ENCODE measurements at regions of chr5 and their contacts with region 1.

Region 1: GRCh38 chr5:179345433-179346321 is at the start of gene ADAMTS2:
- DNase-seq: no peak
- H3K4me3 ChIP-seq: peak within 1 kb of the TSS; percentile 71 to 80 (median 77)
- H3K27ac ChIP-seq: peak within 1 kb of the TSS; percentile 70 to 79 (median 76)
- H3K4me1 ChIP-seq: peaks cover 11 to 46% (median 40%) of the 10 kb centered on the region in 4 donors
- H3K27me3 ChIP-seq: peaks cover 0 to 40% (median 0%) of the 10 kb centered on the region in 4 donors
- CTCF ChIP-seq: no peak
- EP300 ChIP-seq: no peak
- POLR2A ChIP-seq: no peak
- total RNA-seq, gene ADAMTS2: 17.8 to 31.8 (median 21.4) TPM

Region 2: DNA sequence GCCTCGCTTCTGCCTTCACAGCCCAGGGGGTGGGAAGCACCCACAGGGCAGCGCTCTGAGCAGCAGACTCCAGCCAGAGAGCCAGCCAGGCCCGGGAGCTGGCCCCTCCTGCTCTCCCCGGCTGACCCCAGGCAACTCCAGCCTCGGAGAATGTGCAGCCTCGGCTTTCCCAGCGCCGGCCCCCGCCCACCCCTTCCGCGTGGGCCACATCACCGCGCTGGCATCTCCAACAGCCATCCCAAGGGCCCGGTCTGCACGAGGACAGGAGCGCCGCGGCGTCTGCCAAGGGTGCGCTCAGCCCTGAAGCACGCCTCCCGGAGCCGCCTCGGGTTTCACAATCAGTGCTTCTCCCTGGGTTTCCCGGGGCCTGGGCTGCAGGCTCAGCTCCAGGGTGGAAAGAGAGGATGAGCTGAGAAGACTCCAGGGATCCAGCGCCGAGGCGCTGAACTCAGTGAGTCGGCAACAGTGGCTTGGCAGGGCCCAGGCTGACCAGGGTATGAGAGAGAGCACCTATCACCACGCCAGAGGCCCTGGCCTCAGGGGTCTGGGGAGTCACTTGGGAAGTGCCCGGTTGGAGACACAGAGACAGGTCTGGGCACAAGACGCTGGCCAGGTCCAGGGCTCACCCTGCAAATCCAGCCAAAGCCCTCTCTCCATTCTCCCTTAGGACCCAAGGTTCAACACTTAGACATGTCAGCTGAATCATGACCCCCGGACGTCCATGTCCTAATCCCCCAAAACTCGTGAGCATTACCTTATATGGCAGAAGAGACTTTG is 80.0 kb before region 1 on chr5:
- intact Hi-C with region 1: loop called (anchors 5 kb)
- DNase-seq: peak; percentile 96
- H3K4me3 ChIP-seq: peak overlapping the region in 3 of 4 donors; percentile 19 to 43 (median 28)
- H3K27ac ChIP-seq: peak overlapping the region; percentile 77 to 81 (median 80)
- H3K4me1 ChIP-seq: peaks cover 26 to 59% (median 50%) of the 10 kb centered on the region in 4 donors
- H3K27me3 ChIP-seq: no peaks in the 10 kb centered on the region
- CTCF ChIP-seq: no peak
- EP300 ChIP-seq: no peak
- POLR2A ChIP-seq: no peak

Region 3: GRCh38 chr5:179494774-179495526 is 149.3 kb after region 1 on chr5:
- intact Hi-C with region 1: loop called (anchors 5 kb)
- DNase-seq: no peak
- H3K4me3 ChIP-seq: no peak overlapping the region
- H3K27ac ChIP-seq: no peak overlapping the region
- H3K4me1 ChIP-seq: no peaks in the 10 kb centered on the region
- H3K27me3 ChIP-seq: peaks cover 0 to 35% (median 2%) of the 10 kb centered on the region in 4 donors
- CTCF ChIP-seq: no peak
- EP300 ChIP-seq: no peak
- POLR2A ChIP-seq: no peak

Measured in esophagus muscularis mucosa (tissue), 4 donors.